Stomach (tissue), 19 donors: ENCODE measurements at regions of chr1 and their contacts with region 1.

Region 1: DNA sequence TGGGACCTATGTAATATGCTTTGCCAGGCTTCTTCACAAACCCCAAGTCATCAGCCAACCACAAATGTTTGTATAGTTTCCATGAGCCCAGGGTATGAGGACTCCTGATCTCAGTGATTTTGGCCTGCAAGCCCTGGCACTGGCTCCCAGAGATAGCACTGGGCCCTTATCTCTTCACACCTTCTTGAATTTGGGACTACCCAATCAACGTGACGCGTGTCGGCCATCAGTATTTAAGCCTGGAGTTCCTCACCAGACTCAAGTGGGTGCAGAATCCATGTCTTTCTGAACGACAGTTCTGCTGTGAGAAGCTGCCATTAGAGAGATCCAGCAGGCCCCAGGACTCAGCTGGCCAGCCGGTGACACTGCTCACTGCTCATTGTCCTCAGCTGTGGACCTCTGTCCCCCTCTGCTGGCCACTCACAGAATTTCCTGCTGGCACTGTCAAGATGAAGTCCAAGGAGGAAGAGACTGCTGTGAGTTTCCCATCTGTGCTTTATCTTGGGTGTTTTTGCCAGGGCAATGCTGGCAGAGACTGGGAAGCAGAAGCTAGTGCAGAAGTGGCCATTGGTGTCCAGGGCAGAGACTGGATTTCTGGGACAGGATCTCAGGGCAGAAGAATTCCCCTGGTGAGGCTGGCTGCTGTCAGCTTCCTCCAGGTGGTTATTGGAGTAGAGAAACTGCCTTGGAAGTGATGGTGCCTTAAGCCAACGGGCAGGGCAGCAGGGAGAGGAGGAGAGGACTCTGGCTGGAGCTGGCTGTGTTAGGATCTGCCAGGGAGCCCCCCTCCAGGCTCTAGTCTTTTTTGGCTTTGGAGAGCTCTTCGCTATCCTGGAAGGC is 28.4 kb downstream of the TMCC2 start:
- DNase-seq: peak; percentile 92 to 96
- H3K4me3 ChIP-seq: no peak overlapping the region
- H3K27ac ChIP-seq: peak overlapping the region in 1 of 5 donors; percentile 28
- H3K4me1 ChIP-seq: peaks cover 11 to 31% (median 15%) of the 10 kb centered on the region in 4 donors
- H3K27me3 ChIP-seq: no peaks in the 10 kb centered on the region
- CTCF ChIP-seq: peak in 6 of 7 experiments; percentile 67 to 98 (median 94)
- EP300 ChIP-seq: peak; percentile 11
- POLR2A ChIP-seq: no peak

Region 2: GRCh38 chr1:204975570-204976235 is 280.5 kb before region 1 on chr1:
- intact Hi-C with region 1: loop called (anchors 10 kb)
- DNase-seq: peak; percentile 57 to 79
- H3K4me3 ChIP-seq: no peak overlapping the region
- H3K27ac ChIP-seq: no peak overlapping the region
- H3K4me1 ChIP-seq: peaks cover 0 to 5% (median 0%) of the 10 kb centered on the region in 4 donors
- H3K27me3 ChIP-seq: peaks cover 0 to 7% (median 0%) of the 10 kb centered on the region in 3 donors
- CTCF ChIP-seq: peak in 5 of 7 experiments; percentile 71 to 85 (median 78)
- EP300 ChIP-seq: no peak
- POLR2A ChIP-seq: no peak

Region 3: GRCh38 chr1:205121660-205122488 is 134.3 kb before region 1 on chr1 and contains the start of gene RBBP5:
- intact Hi-C with region 1: loop called (anchors 10 kb)
- DNase-seq: peak; percentile 96 to 98
- H3K4me3 ChIP-seq: peak within 1 kb of the TSS; percentile 84 to 97 (median 96)
- H3K27ac ChIP-seq: peak within 1 kb of the TSS; percentile 89 to 97 (median 94)
- H3K4me1 ChIP-seq: peaks cover 16 to 43% (median 31%) of the 10 kb centered on the region in 4 donors
- H3K27me3 ChIP-seq: no peaks in the 10 kb centered on the region
- CTCF ChIP-seq: peak in 5 of 7 experiments; percentile 32 to 65 (median 44)
- EP300 ChIP-seq: no peak
- POLR2A ChIP-seq: peak in 1 of 4 donors; percentile 33
- total RNA-seq, gene RBBP5: 1.4 to 13.4 (median 8.9) TPM